Esophagus muscularis mucosa (tissue), 4 donors: ENCODE measurements at regions of chr1 and their contacts with region 1.

Region 1: DNA sequence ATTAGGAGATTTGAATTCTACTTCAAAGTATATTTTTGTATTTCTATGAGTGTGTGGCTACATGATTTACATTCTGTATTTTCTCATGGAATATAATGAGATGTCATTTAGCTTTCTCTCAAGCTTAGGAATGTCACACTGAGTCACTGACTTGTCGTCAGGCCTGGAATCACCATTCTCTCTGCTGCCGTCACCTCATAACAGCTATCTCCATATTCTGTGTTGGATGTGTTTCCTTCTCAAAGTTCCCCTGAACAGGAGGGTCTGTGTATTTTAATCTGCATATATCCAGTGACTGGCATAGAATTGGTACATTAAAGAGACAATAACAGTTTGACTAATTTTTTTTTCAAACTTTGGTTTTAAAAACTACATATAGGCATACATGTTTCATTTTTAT is 35.9 kb downstream of the LYPLAL1 start:
- DNase-seq: no peak
- H3K4me3 ChIP-seq: no peak overlapping the region
- H3K27ac ChIP-seq: no peak overlapping the region
- H3K4me1 ChIP-seq: no peaks in the 10 kb centered on the region
- H3K27me3 ChIP-seq: no peaks in the 10 kb centered on the region
- CTCF ChIP-seq: no peak
- EP300 ChIP-seq: no peak
- POLR2A ChIP-seq: no peak

Region 2: DNA sequence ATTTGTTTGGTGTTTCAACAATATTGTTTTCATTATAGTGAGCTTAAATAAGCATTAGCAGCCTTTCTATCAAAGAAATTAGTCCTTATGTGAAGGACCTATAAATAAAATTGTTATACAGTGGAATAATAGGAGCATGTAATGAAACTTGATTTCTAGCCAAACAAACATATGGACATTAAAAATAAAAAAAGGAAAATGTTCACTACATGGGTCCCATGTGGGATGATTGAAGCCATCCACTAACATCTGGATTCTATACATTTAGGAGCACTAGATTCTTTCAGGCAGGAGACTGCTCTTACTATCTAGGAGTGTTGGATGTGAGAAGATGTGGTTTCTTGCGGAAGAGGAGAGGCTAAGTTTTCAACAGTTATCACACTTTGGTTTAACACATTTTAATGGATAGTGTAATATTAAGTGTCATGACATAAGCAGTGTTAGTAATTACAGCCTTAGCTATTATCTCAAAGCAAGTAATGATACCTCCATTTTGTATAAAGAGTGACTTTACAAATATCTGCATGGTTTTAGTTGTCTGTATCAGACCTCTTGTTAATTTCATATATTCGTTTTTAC is 26.4 kb after region 1 on chr1:
- intact Hi-C with region 1: no loop called
- DNase-seq: no peak
- H3K4me3 ChIP-seq: no peak overlapping the region
- H3K27ac ChIP-seq: no peak overlapping the region
- H3K4me1 ChIP-seq: peaks cover 0 to 12% (median 10%) of the 10 kb centered on the region in 4 donors
- H3K27me3 ChIP-seq: no peaks in the 10 kb centered on the region
- CTCF ChIP-seq: no peak
- EP300 ChIP-seq: no peak
- POLR2A ChIP-seq: no peak

Region 3: GRCh38 chr1:219385786-219386427 is 176.3 kb after region 1 on chr1:
- intact Hi-C with region 1: loop called (anchors 10 kb)
- DNase-seq: no peak
- H3K4me3 ChIP-seq: no peak overlapping the region
- H3K27ac ChIP-seq: no peak overlapping the region
- H3K4me1 ChIP-seq: no peaks in the 10 kb centered on the region
- H3K27me3 ChIP-seq: no peaks in the 10 kb centered on the region
- CTCF ChIP-seq: peak; percentile 43 to 66 (median 53)
- EP300 ChIP-seq: no peak
- POLR2A ChIP-seq: no peak

Region 4: GRCh38 chr1:219566951-219567947 is 357.7 kb after region 1 on chr1:
- intact Hi-C with region 1: loop called (anchors 5 kb)
- DNase-seq: no peak
- H3K4me3 ChIP-seq: no peak overlapping the region
- H3K27ac ChIP-seq: no peak overlapping the region
- H3K4me1 ChIP-seq: peaks cover 0 to 7% (median 0%) of the 10 kb centered on the region in 4 donors
- H3K27me3 ChIP-seq: no peaks in the 10 kb centered on the region
- CTCF ChIP-seq: peak; percentile 36 to 44 (median 36)
- EP300 ChIP-seq: no peak
- POLR2A ChIP-seq: no peak